ENCODE measurements at regions of chr17 and their contacts with region 1.

Region 1: DNA sequence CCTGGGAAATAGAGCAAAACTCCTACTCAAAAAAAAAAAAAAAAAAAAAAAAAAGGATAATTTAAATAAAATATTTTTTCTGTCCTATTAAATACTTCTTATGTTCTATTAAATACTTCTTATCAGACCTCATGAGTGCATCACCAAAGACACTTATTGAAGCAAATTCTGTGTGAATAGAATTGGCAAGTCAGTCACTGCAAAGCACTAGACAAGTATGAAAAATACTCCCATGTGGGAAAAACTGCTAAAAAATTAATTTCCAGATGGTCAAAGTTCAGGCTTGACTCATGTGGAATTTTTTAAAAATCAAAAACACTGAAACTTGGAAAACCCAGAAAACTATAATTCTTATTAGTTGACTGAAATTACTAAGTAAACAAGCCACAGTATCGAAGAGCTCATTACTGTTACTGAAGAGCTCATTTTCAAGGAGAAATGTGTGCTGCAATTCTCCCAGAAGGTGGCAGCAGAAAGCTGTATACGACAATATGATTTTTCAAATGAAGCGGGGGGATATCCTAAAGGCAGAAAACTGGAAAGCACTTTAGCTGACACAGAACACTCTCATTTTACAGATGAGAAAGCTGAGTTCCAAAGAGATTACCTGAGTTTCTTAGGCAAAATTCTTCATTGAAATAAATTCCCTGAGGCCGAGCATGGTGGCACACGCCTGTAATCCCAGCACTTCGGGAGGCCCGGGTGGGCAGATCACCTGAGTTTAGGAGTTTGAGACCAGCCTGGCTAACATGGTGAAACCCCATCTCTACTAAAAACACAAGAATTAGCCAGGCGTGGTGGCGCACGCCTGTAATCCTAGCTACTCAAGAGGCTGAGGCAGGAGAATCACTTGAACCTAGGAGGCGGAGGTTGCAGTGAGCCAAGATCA is 15.9 kb upstream of the FBXO47 start:
- DNase-seq: peak; percentile 50
- H3K4me3 ChIP-seq: no peak overlapping the region
- H3K27ac ChIP-seq: no peak overlapping the region
- H3K27me3 ChIP-seq: no peaks in the 10 kb centered on the region
- CTCF ChIP-seq: peak; percentile 82

Region 2: DNA sequence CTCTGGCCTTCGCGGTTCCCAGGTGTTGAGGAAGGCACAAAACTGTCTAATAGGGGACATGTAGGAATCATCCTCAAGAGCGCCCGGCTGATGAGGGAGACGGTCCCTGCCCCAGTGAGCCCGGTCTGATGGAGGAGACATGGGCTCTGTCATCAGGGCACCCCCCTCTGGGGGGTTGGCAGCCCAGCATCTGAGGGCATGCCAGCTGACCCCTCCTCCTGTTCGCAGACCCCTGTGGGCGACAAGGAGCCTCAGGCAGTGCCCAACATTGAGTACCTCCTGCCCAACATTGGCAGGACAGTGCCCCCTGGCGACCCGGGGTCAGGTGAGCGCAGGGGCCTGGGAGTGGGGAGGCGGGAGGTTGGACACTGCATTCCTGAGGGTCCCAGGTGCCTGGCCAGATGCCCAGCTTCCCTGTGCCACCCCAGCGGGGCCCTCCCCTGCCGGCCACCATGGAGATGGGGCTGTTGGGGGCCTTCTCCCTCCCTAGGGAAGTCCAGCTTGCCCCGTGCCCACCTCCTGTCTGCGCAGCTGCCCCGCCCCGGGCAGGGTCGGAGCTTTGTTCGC is 484.8 kb before region 1 on chr17:
- CTCF ChIA-PET with region 1: no interaction called
- POLR2A ChIA-PET with region 1: no interaction called
- DNase-seq: no peak
- H3K4me3 ChIP-seq: no peak overlapping the region
- H3K27ac ChIP-seq: no peak overlapping the region
- H3K27me3 ChIP-seq: no peaks in the 10 kb centered on the region
- CTCF ChIP-seq: no peak

Region 3: DNA sequence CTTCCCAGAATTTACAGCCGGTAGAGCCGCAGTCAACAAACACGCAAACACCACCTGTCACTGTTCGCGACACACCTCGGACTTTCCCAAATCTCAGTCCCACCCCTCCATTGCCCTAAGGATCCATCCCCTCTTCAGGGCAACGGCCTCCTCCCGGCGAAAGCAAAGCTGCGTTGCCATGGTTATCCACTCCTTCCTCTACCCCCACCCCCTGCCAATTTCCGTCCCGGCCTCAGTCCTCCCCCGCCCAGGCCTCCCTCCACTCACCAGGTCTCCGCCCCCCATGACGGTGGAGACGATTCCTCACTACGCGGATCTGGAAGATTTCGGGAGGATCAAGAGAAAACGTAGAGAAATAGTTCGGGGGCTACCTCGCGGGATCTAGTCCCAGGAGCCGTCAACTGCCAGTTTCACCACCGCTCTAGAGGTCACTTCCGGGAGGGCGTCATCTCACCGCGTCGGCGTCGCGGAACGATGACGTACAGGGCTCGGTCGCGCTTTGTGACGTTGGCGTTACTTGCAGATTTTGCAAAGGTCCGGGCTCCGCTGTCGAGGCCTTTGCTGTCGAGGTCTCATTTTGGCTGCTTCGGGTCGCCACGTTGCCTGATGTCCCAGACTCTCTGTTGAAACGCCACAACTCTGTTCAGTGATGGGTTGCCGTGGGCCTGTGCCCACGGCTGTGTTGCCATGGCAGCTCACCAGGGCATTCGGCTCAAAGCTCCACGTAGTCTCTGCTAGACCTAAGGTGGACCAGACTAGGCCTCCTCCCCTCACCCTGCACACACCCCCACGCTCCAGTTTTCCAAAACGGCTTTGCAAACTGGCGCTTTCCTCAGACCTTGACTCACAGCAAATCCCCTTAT is 158.0 kb before region 1 on chr17 and contains the start of gene CWC25:
- CTCF ChIA-PET with region 1: no interaction called
- POLR2A ChIA-PET with region 1: no interaction called
- DNase-seq: peak; percentile 92
- H3K4me3 ChIP-seq: peak within 1 kb of the TSS; percentile 93
- H3K27ac ChIP-seq: peak within 1 kb of the TSS; percentile 99
- H3K27me3 ChIP-seq: no peaks in the 10 kb centered on the region
- CTCF ChIP-seq: no peak
- polyA plus RNA-seq, gene CWC25: 13.3 and 15.3 TPM in 2 replicates

Region 4: GRCh38 chr17:38852771-38853291 is 130.3 kb before region 1 on chr17:
- CTCF ChIA-PET with region 1: no interaction called
- POLR2A ChIA-PET with region 1: no interaction called
- DNase-seq: no peak
- H3K4me3 ChIP-seq: peak overlapping the region; percentile 91
- H3K27ac ChIP-seq: peak overlapping the region; percentile 90
- H3K27me3 ChIP-seq: no peaks in the 10 kb centered on the region
- CTCF ChIP-seq: no peak

Region 5: GRCh38 chr17:38892083-38892482 is 91.0 kb before region 1 on chr17:
- CTCF ChIA-PET with region 1: no interaction called
- POLR2A ChIA-PET with region 1: no interaction called
- DNase-seq: no peak
- H3K4me3 ChIP-seq: no peak overlapping the region
- H3K27ac ChIP-seq: no peak overlapping the region
- H3K27me3 ChIP-seq: no peaks in the 10 kb centered on the region
- CTCF ChIP-seq: no peak

Region 6: GRCh38 chr17:38958756-38959155 is 24.3 kb before region 1 on chr17:
- CTCF ChIA-PET with region 1: interaction called, 17 read pairs
- POLR2A ChIA-PET with region 1: interaction called, 7 read pairs
- DNase-seq: no peak
- H3K4me3 ChIP-seq: no peak overlapping the region
- H3K27ac ChIP-seq: peak overlapping the region; percentile 57
- H3K27me3 ChIP-seq: no peaks in the 10 kb centered on the region
- CTCF ChIP-seq: no peak

Region 7: DNA sequence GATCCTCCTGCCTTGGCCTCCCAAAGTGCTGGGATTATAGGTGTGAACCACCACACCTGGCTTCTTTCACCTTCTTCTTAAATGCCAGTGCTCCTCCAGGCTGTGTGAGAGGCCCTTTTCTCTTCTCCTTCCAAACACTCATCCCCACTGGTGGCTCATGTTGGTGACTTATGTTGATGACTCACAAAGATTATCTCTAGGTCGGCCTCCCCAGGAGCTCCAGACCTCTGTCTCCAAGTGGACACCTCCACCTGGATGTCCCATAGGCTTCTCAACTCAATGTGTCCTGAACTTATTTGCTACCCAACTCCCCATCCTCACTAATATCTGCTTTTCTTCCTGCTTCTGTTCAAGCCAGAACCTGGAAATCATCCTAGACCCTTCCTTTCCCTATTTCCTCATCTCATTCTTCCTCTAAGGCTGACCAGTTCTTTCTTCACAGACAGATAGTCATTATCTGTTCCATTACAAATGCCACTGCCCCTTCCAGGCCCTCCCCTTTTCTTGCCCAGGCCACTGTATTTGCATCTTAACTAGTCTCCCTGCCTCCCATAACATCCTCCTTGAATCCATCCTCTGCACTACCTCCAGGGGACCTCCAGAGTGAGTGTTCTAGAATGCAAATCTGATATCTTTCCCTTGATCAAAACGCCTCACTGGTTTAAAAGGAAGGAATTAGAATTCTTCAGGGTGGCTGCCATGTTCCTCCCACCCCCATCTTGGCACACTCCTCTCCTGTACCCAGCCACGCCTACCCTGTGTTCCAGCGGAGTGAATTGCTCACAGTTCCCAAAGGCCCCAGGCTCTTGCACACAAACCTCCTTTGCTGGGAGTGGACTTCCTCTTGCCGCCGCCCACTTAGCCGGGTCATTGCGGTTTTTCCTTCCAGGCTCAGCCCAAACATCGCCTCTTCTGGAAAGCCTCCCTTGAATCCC is 18.9 kb after region 1 on chr17:
- CTCF ChIA-PET with region 1: interaction called, 21 read pairs
- POLR2A ChIA-PET with region 1: no interaction called
- DNase-seq: no peak
- H3K4me3 ChIP-seq: no peak overlapping the region
- H3K27ac ChIP-seq: no peak overlapping the region
- H3K27me3 ChIP-seq: peaks cover 10% of the 10 kb centered on the region
- CTCF ChIP-seq: no peak

Region 8: GRCh38 chr17:39153599-39154051 is 170.5 kb after region 1 on chr17:
- CTCF ChIA-PET with region 1: interaction called, 367 read pairs
- POLR2A ChIA-PET with region 1: interaction called, 18 read pairs
- DNase-seq: peak; percentile 78
- H3K4me3 ChIP-seq: peak overlapping the region; percentile 94
- H3K27ac ChIP-seq: peak overlapping the region; percentile 61
- H3K27me3 ChIP-seq: peaks cover 26% of the 10 kb centered on the region
- CTCF ChIP-seq: no peak; the same call in 1 of the 2 replicates

Region 9: DNA sequence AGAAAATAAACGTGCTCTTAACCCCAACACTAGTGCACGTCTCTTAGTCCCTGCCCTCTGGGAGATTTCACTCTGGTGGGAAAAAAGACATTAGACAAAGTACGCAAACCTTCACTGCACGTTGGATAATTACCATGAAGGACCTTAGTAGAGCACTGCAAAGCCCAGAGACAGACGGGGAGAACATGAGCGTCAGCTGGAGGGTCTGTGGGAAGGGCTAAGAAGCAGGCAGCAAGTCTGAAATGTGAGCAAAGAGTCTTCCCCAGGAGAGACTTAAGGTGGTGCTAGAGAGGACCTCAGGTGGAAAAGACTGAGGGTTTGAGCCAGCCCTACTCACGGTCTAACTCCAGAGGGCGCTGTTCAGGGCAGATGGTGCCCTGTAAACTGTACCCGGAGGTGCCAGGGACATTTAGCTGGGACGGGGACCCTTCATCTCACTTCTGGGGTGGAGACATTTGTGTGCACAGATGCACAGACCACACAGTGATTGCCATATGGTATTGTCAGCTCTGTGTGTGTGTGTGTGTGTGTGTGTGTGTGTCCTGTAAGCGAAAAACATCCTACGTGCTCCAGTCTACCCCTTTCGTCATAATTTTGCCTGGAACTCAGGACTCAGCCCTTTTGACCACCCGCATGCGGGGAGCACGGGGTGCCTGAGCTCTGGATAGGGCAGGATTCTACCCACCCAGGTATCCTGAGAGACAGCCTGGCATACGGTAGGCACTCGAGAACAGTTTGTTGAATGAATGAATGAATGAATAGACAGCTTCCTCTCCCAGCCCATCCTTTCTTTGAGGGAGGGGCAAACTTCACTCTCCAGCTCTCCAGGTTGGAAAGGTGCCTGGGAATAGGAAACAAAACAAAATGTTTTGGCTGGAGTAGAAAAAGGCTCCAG is 252.7 kb after region 1 on chr17:
- CTCF ChIA-PET with region 1: interaction called, 16 read pairs
- POLR2A ChIA-PET with region 1: interaction called, 7 read pairs
- DNase-seq: no peak
- H3K4me3 ChIP-seq: no peak overlapping the region
- H3K27ac ChIP-seq: no peak overlapping the region
- H3K27me3 ChIP-seq: no peaks in the 10 kb centered on the region
- CTCF ChIP-seq: peak; percentile 69

Measured in AG04450 (cell line).